ENCODE measurements at regions of chr16 and their contacts with region 1.

Region 1: DNA sequence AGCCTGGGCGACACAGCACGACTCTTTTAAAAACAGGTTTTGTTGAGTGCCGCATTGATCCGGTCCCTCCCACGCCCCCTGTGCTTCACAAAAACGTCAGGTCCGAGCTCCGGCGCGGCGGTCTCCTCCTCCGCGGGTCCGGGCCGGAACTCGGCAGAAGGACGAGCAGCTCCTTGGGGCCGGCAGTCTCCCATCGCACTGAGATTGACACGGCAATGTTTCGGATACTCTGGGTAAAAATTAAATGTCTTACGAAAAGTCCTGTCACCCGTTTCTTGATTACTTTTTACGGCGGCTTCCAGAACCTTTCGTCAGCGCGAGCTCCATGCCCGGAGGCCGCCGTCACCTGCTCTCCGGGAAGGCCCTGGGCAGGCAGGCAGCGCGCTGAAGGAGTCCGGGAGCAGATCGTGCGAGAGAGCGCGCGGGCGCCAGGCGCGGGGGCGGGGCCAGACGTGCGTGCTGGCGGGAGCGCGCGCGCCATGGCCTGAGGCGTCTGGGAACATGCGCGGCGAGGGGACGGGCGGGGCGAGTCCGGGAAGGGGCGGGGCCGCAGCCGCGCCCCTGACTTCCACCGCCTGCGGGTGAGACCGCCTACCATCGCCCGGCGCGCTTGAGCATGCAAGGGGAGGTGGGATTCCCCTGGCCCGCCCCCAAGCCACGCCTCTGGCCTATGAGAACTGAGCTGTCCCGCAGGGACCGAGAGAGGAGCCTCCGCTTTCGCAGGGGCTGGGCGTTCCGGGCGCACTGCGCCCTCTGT is 11.7 kb upstream of the SRL start:
- DNase-seq: peak; percentile 100
- ATAC-seq: peak; percentile 97
- H3K4me3 Mint-ChIP-seq: peak overlapping the region; percentile 87
- H3K27ac Mint-ChIP-seq: peak overlapping the region; percentile 96
- H3K4me1 Mint-ChIP-seq: peaks cover 8% of the 10 kb centered on the region; the same call in 1 of the 2 replicates
- H3K27me3 Mint-ChIP-seq: no peaks in the 10 kb centered on the region
- CTCF ChIP-seq: no peak

Region 2: DNA sequence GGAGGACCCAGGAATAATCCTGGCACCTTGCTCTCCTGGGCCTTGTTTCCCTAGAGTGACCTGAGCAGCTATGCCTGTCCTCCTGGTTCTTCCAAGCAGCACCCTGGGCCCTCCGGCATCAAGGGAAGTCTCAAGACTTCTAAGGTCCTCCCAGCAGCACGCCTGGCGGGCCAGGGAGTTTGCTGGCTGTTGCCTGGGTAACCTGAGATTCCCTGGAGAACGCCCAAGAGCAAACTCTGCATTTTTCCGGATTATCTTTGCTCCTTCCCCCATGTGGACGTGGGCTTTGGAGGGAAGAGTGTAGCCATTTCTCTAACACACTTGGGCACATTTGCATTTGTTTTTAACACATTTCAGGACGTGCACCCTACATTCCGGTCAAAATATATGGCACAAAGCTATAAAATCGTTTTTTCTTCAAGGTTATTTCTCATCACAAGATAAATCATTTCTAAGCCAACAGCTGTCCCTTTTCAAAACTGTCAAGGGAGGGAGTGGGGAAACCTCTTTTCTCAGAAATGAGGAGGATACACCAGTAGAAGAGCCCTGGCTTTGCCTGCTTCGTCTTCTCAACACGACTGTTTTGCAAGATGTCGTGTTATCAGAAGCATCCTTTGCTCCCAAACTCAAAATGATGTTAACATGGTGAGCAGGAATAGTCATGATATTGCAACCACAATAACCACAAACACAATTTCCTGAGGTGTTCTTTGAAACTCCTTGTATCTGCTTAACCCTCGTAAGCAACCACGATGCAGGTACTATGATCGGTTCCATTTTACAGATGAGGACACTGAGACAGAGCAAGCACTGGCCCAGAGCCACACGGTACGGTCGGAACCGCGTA is 253.9 kb before region 1 on chr16:
- CTCF ChIA-PET with region 1: interaction called, 10 read pairs
- POLR2A ChIA-PET with region 1: no interaction called
- DNase-seq: peak; percentile 35
- ATAC-seq: peak; percentile 57
- H3K4me3 Mint-ChIP-seq: no peak overlapping the region
- H3K27ac Mint-ChIP-seq: peak overlapping the region; percentile 67
- H3K4me1 Mint-ChIP-seq: peaks cover 20% of the 10 kb centered on the region
- H3K27me3 Mint-ChIP-seq: no peaks in the 10 kb centered on the region
- CTCF ChIP-seq: no peak

Region 3: DNA sequence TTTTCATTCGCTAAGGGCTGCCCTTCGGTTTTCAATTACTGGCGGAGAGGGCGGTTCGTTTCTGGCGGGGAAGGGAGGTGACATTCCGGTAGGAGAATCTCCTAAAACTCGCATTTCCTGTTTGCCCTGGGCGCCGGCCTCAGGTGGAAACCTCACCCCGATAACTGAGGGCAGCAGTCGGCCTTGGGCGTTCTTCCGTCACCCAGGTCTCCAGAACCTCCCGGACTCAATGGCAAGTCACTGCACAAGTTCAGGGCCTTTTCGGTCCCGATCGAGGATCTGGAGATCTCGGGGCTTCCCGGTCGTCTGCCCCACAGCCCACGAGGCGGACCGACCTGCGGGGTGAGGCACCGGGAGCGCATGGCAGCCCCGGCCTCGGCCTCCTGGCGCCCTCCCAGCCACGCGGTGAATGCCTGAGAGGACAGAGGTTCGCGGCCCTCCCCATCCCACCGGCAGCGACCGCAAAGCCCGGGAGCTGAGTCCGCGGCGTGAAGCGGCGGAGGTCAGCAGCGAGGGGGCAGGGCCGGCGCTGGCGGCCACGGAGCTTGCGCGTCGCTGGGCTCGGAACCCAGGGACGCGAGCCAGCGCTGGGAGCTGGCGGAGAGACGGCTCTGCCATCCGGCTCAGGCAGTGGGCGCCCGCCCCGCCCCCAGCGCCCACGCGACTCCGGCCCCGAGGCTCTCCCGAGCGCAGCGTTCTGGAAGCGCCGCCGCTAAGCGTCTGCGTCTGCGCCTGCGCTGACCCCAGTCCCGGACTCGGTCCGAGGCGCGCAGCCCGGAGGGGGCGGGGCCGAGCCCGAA is 70.1 kb before region 1 on chr16:
- CTCF ChIA-PET with region 1: interaction called, 35 read pairs
- POLR2A ChIA-PET with region 1: interaction called, 6 read pairs
- DNase-seq: peak; percentile 96
- ATAC-seq: peak; percentile 87
- H3K4me3 Mint-ChIP-seq: peak overlapping the region; percentile 75
- H3K27ac Mint-ChIP-seq: peak overlapping the region; percentile 45; the same call in 1 of the 2 replicates
- H3K4me1 Mint-ChIP-seq: peaks cover 4% of the 10 kb centered on the region
- H3K27me3 Mint-ChIP-seq: peaks cover 6% of the 10 kb centered on the region; the same call in 1 of the 2 replicates
- CTCF ChIP-seq: no peak

Region 4: DNA sequence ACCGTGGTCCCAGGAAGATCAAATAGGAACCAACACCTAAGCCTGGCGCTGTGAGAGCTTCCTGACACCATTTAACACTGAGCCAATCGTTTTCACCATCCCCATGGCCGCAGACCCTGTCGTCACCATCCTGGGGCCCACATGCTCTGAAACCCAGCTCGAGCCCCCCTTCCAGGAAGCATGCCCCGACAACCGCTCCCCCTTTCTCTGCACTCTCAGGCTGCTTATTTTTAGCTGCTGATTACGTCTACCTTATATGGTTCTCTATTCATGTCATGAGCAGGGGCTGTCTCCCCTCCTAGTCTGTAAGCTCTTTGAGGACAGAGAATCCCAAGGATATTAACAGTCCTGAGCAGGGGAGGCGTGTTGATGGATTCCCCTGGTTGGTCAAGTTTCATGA is 22.2 kb before region 1 on chr16:
- CTCF ChIA-PET with region 1: interaction called, 18 read pairs
- POLR2A ChIA-PET with region 1: interaction called, 7 read pairs
- DNase-seq: no peak
- ATAC-seq: no peak
- H3K4me3 Mint-ChIP-seq: no peak overlapping the region
- H3K27ac Mint-ChIP-seq: no peak overlapping the region; the same call in 1 of the 2 replicates
- H3K4me1 Mint-ChIP-seq: no peaks in the 10 kb centered on the region
- H3K27me3 Mint-ChIP-seq: no peaks in the 10 kb centered on the region
- CTCF ChIP-seq: no peak

Region 5: DNA sequence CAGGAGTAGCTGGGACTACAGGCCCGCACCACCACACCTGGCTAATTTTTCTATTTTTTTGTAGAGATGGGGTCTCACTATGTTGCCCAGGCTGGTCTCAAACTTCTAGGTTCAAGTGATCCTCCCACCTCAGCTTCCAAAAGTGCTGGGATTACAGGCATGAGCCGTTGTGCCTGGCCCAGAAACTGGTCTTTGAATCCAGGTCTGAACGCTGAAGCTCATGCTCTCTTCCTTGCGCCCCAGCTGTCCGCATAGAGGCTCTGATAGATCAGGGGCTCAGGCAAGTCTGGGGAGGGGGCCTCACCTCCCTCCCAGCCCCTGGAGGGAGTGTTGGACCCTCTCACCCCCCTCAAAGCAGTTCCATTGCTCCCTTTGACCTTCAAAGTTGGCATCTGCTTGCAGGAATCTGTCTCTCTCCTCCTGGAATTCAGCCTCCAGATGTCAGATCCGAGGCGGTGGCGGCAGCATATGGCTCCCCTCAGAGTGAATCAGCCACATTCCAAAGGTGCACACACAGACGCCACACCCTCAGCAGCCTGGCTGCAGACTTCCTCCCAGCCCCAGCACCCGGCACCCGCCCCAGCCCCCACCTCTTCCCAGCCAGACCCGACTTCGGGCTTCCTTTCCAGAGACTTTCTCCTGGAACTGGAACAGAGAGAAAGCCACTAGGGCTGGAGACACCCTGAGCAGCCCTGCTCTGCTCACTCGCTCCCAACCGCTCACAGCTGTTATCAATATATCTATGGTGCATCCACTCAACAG is 45.4 kb after region 1 on chr16:
- CTCF ChIA-PET with region 1: interaction called, 18 read pairs
- POLR2A ChIA-PET with region 1: interaction called, 3 read pairs
- DNase-seq: peak; percentile 76
- ATAC-seq: peak; percentile 87
- H3K4me3 Mint-ChIP-seq: no peak overlapping the region
- H3K27ac Mint-ChIP-seq: peak overlapping the region; percentile 98
- H3K4me1 Mint-ChIP-seq: peaks cover 27% of the 10 kb centered on the region
- H3K27me3 Mint-ChIP-seq: no peaks in the 10 kb centered on the region
- CTCF ChIP-seq: no peak

Region 6: GRCh38 chr16:4350787-4351659 is 97.5 kb after region 1 on chr16 and contains the start of gene PAM16:
- CTCF ChIA-PET with region 1: interaction called, 17 read pairs
- POLR2A ChIA-PET with region 1: no interaction called
- DNase-seq: peak; percentile 99
- ATAC-seq: peak; percentile 96
- H3K4me3 Mint-ChIP-seq: peak within 1 kb of the TSS; percentile 95
- H3K27ac Mint-ChIP-seq: peak within 1 kb of the TSS; percentile 70
- H3K4me1 Mint-ChIP-seq: peaks cover 11% of the 10 kb centered on the region
- H3K27me3 Mint-ChIP-seq: 0 out of 2 replicates have a peak, but pooled peaks cover 3% of the 10 kb centered on the region
- CTCF ChIP-seq: no peak
- total RNA-seq, gene PAM16: 87.2 to 93.7 TPM (median 88.9 TPM) in 3 replicates

Region 7: DNA sequence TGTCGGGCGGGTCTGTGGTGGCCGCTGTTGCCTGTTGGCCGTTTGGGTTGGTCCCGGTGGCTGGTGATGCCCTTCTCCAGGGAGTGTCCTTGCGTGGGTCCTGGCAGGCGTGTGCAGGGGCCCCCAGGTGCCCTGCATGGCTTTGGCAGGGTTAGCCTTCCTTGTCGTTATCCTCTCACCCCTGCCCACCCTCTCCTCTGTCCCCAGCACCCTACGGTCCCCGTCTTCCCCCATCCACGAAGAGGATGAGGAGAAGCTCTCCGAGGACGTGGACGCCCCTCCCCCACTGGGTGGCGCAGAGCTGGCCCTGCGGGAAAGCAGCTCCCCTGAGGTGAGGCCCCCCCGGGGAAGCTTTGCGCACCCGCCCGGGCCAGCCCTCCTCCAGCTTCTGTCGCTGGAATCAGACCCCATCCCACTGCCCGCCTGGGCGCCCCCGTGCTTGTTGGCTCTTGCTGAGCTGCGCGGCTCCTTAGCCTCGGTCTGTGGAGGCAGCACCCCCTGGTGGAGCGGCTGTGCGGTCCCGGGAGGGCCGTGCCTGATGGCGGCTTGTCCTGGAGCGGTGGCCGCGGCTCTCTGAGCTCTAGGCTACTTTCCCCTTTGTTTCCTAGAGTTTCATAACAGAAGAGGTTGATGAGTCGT is 429.2 kb after region 1 on chr16:
- CTCF ChIA-PET with region 1: no interaction called
- POLR2A ChIA-PET with region 1: no interaction called
- DNase-seq: peak; percentile 86
- ATAC-seq: peak; percentile 92
- H3K4me3 Mint-ChIP-seq: no peak overlapping the region
- H3K27ac Mint-ChIP-seq: no peak overlapping the region
- H3K4me1 Mint-ChIP-seq: no peaks in the 10 kb centered on the region
- H3K27me3 Mint-ChIP-seq: no peaks in the 10 kb centered on the region
- CTCF ChIP-seq: peak; percentile 49; the same call in 1 of the 2 replicates